MCF 10A (cell line): ENCODE measurements at regions of chr13 and their contacts with region 1.

Region 1: GRCh38 chr13:79423801-79424642 is 18.0 kb upstream of the RBM26 start:
- DNase-seq: peak; percentile 61
- H3K4me3 Mint-ChIP-seq: no peak overlapping the region
- H3K27ac Mint-ChIP-seq: no peak overlapping the region
- H3K4me1 Mint-ChIP-seq: no peaks in the 10 kb centered on the region
- H3K27me3 Mint-ChIP-seq: no peaks in the 10 kb centered on the region
- CTCF ChIP-seq: peak; percentile 48

Region 2: DNA sequence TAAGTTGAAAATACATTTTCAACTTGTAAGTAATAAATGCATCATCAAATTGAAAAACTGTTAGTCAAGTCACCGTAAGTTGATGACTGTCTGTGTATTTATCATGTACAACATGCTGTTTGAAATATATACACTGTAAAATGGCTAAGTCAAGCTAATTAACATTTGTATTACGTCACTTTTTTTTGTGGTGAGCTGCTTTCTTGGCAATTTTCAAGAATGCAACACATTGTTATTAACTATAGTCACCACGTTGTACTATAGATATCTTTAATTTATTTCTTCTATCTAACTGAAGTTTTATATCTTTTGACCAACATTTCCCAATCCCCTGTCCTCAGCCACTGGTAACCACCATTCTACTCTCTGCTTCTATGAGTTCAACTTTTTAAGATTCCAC is 75.0 kb before region 1 on chr13:
- CTCF ChIA-PET with region 1: no interaction called
- POLR2A ChIA-PET with region 1: no interaction called
- intact Hi-C with region 1: no loop called
- DNase-seq: no peak
- H3K4me3 Mint-ChIP-seq: no peak overlapping the region
- H3K27ac Mint-ChIP-seq: no peak overlapping the region
- H3K4me1 Mint-ChIP-seq: no peaks in the 10 kb centered on the region
- H3K27me3 Mint-ChIP-seq: no peaks in the 10 kb centered on the region
- CTCF ChIP-seq: no peak

Region 3: DNA sequence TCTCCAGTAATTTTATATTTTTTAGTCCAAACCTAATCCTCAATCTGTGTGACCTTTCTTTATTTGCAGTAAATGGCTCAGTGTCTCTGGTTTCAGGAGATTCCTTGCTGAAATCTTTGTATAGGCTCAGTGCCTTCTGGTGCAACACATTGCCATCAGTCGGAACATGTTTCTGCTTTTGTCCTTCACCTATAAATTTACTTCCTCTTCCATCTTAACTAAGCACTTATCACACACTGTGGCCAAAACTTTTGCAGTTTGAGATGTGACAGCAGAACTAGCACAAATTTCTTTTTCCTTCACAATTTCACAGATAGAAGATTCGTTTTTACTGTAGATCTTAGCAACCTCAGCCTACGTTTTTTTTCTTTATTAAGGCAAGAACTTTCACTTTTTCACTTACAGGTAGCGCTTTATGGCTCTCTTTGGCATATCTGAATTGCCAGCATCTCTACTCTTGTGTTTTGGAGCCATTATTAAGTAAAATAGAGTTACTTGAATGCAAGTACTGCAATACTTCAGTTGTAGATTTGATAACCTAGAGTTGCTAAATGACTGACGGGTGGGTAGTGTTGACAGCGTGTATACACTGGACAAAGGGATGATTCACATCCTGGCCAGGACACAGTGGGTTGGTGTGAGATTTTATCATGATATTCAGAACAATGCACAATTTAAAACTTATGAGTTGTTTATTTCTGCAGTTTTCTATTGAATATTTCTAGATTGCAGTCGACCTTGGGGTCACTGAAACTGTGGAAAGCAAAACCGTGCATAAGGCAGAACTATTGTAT is 101.2 kb after region 1 on chr13:
- CTCF ChIA-PET with region 1: interaction called, 11 read pairs
- POLR2A ChIA-PET with region 1: interaction called, 5 read pairs
- intact Hi-C with region 1: no loop called
- DNase-seq: peak; percentile 72
- H3K4me3 Mint-ChIP-seq: no peak overlapping the region
- H3K27ac Mint-ChIP-seq: no peak overlapping the region
- H3K4me1 Mint-ChIP-seq: peaks cover 13% of the 10 kb centered on the region
- H3K27me3 Mint-ChIP-seq: no peaks in the 10 kb centered on the region
- CTCF ChIP-seq: no peak

Region 4: DNA sequence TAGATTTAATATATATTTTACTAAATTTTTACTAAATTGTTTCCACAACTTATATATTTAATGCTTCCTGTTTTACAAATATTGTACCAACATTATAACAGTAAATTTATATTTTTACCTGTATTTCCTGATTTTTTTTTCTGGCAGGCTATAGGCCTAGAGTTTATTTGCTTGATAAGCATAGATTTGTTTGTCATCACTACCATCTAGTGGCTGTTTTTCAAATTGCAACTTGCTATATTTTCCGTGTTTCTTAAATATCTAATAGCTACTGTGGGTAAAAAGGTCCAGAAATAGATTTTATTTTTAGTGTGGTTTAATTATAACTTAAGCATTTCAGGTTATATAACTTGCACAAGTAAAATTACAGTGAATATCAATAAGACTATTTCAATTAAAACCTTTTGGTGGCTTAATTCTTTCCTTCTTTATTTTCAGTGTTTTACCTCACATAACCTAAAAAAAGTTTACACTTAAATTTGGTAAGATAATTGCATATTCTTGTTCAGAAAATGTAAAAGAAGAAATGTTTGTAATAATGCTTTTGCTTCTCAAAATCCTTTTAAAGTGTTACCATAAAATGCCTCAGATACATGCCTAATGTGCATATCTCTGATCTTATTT is 117.5 kb after region 1 on chr13:
- CTCF ChIA-PET with region 1: interaction called, 102 read pairs
- POLR2A ChIA-PET with region 1: interaction called, 30 read pairs
- intact Hi-C with region 1: loop called (anchors 1 kb)
- DNase-seq: peak; percentile 66
- H3K4me3 Mint-ChIP-seq: no peak overlapping the region
- H3K27ac Mint-ChIP-seq: no peak overlapping the region
- H3K4me1 Mint-ChIP-seq: no peaks in the 10 kb centered on the region
- H3K27me3 Mint-ChIP-seq: no peaks in the 10 kb centered on the region
- CTCF ChIP-seq: peak; percentile 73